ENCODE measurements at regions of chr10 and their contacts with region 1.

Region 1: DNA sequence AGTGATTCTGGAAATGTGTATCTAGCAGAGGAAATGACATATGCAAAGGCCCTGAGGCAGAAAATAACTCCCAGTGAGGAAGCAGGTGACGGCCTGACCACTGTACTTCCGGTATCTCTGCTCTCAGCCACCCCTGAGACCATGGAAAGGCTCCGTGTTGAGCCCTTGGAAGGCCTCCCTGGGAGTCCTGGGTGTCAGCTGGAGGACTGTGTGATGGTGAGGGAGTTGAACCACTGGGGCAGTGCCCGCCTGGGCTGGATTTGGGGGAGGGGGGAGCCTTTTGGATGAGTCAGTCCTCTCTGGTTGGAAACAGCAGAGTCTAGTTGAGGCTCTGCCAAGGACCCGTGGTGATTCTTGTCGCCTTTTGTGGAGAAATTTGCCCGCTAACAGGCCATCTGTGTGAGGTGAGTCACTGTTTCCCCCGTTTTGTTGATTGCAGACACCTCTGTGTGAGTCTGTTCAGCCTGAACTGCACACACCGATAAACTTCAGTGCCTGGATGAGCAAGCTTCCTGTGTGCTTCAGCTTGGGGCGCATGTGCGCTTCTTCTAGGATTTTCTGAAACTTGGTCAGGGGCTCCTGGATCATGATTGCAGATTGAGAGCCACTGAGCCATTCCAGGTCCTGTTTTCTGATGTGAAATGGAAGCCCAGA is 98.6 kb downstream of the GRK5 start:
- DNase-seq: peak; percentile 82
- H3K4me3 Mint-ChIP-seq: peak overlapping the region; percentile 79
- H3K27ac Mint-ChIP-seq: peak overlapping the region; percentile 100
- H3K4me1 Mint-ChIP-seq: peaks cover 89% of the 10 kb centered on the region
- H3K27me3 Mint-ChIP-seq: peaks cover 4% of the 10 kb centered on the region

Region 2: GRCh38 chr10:118911361-118911760 is 394.6 kb before region 1 on chr10:
- intact Hi-C with region 1: no loop called
- DNase-seq: no peak
- H3K4me3 Mint-ChIP-seq: no peak overlapping the region
- H3K27ac Mint-ChIP-seq: no peak overlapping the region
- H3K4me1 Mint-ChIP-seq: no peaks in the 10 kb centered on the region
- H3K27me3 Mint-ChIP-seq: peaks cover 3% of the 10 kb centered on the region

Region 3: GRCh38 chr10:119131512-119132240 is 174.3 kb before region 1 on chr10:
- intact Hi-C with region 1: loop called (anchors 2 kb)
- DNase-seq: peak; percentile 65
- H3K4me3 Mint-ChIP-seq: peak overlapping the region; percentile 80
- H3K27ac Mint-ChIP-seq: peak overlapping the region; percentile 92
- H3K4me1 Mint-ChIP-seq: peaks cover 66% of the 10 kb centered on the region
- H3K27me3 Mint-ChIP-seq: no peaks in the 10 kb centered on the region

Region 4: GRCh38 chr10:119268871-119269506 is 37.0 kb before region 1 on chr10:
- intact Hi-C with region 1: loop called (anchors 1 kb)
- DNase-seq: peak; percentile 85
- H3K4me3 Mint-ChIP-seq: peak overlapping the region; percentile 43
- H3K27ac Mint-ChIP-seq: peak overlapping the region; percentile 98
- H3K4me1 Mint-ChIP-seq: peaks cover 76% of the 10 kb centered on the region
- H3K27me3 Mint-ChIP-seq: no peaks in the 10 kb centered on the region

Region 5: GRCh38 chr10:119416855-119417254 is 110.9 kb after region 1 on chr10:
- intact Hi-C with region 1: loop called (anchors 1 kb)
- DNase-seq: peak; percentile 51
- H3K4me3 Mint-ChIP-seq: no peak overlapping the region
- H3K27ac Mint-ChIP-seq: no peak overlapping the region
- H3K4me1 Mint-ChIP-seq: no peaks in the 10 kb centered on the region
- H3K27me3 Mint-ChIP-seq: no peaks in the 10 kb centered on the region

Region 6: GRCh38 chr10:119596537-119597404 is 290.8 kb after region 1 on chr10 and contains the start of gene TIAL1:
- intact Hi-C with region 1: loop called (anchors 2 kb)
- DNase-seq: peak; percentile 92
- H3K4me3 Mint-ChIP-seq: peak within 1 kb of the TSS; percentile 91
- H3K27ac Mint-ChIP-seq: peak within 1 kb of the TSS; percentile 98
- H3K4me1 Mint-ChIP-seq: peaks cover 51% of the 10 kb centered on the region
- H3K27me3 Mint-ChIP-seq: no peaks in the 10 kb centered on the region
- total RNA-seq, gene TIAL1: 192 and 195 TPM in 2 replicates

Region 7: DNA sequence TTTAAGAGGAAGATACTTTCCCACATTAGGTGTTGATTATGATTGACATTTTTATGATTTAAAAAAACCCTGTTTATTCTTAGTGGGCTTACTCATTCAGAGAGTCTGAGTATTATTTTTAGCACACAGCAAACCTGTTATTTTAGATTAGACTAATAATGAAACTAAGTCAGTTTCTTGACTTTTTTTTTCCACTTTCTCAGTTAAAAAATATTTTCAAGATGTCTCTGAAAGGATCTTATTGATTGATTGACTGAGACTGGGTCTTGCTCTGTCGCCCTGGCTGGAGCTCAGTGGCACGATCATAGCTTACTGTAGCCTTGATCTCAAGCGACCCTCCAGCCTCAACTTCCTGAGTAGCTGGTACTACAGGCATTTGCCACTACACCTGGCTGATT is 399.4 kb after region 1 on chr10:
- intact Hi-C with region 1: loop called (anchors 10 kb)
- DNase-seq: no peak
- H3K4me3 Mint-ChIP-seq: peak overlapping the region; percentile 74
- H3K27ac Mint-ChIP-seq: peak overlapping the region; percentile 99
- H3K4me1 Mint-ChIP-seq: peaks cover 82% of the 10 kb centered on the region
- H3K27me3 Mint-ChIP-seq: peaks cover 2% of the 10 kb centered on the region

Measured in activated T-helper 1 cell treated with anti-CD3 and anti-CD28 coated beads, Interleukin-12 subunit alpha, Interleukin-12 subunit beta, Interleukin-2, Interleukin-4 antibody, amounts not matched to agents 30 ng/mL and 10 ng/mL and 1 ng/mL, durations not matched to agents 14 hours and 24 hours and 36 hours (primary cell).